HEK293 (cell line): ENCODE measurements at regions of chr21 and their contacts with region 1.

Region 1: GRCh38 chr21:16088056-16088455 is 358.3 kb downstream of the USP25 start:
- H3K4me3 ChIP-seq: no peak overlapping the region
- H3K27ac ChIP-seq: no peak overlapping the region
- H3K4me1 ChIP-seq: no peaks in the 10 kb centered on the region
- CTCF ChIP-seq: no peak

Region 2: DNA sequence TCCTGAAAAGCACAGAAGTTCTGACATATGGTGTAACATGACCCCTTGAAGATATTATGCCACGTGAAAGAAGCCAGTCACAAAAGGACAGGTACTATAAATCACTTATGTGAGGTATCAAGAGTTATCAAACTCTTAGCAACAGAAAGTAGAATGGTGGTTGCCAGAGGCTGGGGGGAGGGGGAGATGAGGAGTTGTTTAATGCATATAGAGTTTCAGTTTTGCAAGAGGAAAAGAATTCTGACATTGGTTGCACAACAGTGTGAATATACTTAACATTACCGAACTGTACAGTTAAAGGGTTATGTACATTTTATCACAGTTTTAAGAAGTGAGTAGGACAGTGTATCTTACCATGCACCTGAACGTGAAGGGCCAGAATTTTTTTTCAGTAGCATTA is 278.2 kb before region 1 on chr21:
- CTCF ChIA-PET with region 1: no interaction called
- POLR2A ChIA-PET with region 1: no interaction called
- H3K4me3 ChIP-seq: no peak overlapping the region
- H3K27ac ChIP-seq: no peak overlapping the region
- H3K4me1 ChIP-seq: peaks cover 5% of the 10 kb centered on the region; the same call in 1 of the 2 replicates
- CTCF ChIP-seq: no peak

Region 3: DNA sequence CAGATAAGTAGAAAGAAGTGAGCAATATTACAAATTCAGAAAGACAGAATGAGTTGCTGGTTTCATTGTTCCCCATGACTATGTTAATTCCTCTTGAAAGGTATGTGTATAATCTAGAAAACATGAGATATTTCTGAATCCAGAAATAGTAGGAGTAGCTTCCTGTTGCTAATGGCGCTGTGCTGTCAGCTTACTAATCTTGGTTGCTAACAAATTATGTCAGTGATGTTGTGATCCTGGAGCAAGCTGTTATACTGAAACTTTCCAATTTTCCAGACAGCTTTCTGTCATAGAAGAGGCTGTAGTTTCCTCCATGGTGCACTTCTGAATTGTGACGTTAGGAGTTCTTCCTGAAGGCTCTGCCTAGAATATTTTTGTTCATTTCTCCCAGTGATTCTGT is 14.1 kb after region 1 on chr21:
- CTCF ChIA-PET with region 1: interaction called, 11 read pairs
- POLR2A ChIA-PET with region 1: no interaction called
- H3K4me3 ChIP-seq: no peak overlapping the region
- H3K27ac ChIP-seq: no peak overlapping the region
- H3K4me1 ChIP-seq: no peaks in the 10 kb centered on the region
- CTCF ChIP-seq: no peak